ENCODE measurements at regions of chr1 and their contacts with region 1.

Region 1: DNA sequence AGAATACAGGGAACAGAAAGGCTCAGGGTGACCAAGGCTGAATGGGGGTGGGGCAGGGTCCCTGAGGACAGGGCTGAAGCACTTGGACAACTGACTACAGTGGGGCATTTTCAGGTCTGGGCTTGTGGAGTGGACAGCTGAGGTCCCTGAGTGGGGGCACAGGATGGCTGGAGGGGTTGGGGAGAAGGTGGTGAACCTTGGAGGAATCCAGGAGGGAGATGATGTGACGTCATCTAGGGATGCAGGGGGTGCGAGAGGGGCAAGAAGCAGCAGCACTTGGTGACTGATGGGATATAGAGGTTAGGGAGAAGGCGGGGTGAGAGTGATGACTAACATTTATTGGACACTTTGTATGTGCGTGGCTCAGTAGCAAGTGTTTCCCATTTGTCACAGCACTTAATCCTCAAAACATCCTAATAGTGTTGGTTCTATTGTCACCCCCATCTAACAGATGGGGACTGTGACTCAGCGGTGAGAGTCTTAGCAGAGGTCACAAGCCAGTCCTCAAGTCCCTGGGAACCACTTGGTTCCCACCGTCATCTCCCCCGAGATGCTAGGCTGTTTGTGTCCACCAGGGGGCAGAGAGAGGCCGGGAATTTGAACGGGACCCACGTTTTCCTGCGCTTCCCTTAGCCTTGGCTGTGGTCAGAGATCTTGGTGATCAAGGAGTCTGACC is 27.9 kb upstream of the BMP8B start:
- DNase-seq: peak; percentile 80
- ATAC-seq: peak; percentile 61
- H3K4me3 ChIP-seq: peak overlapping the region in 4 of 5 experiments; percentile 25 to 45 (median 28)
- H3K4me3 Mint-ChIP-seq: peak overlapping the region; percentile 78
- H3K27ac ChIP-seq: no peak overlapping the region
- H3K27ac Mint-ChIP-seq: peak overlapping the region; percentile 38
- H3K4me1 ChIP-seq: peaks cover 6 to 15% of the 10 kb centered on the region in 2 donors
- H3K4me1 Mint-ChIP-seq: peaks cover 10% of the 10 kb centered on the region
- H3K27me3 ChIP-seq: no peaks in the 10 kb centered on the region
- H3K27me3 Mint-ChIP-seq: no peaks in the 10 kb centered on the region
- CTCF ChIP-seq: peak; percentile 78

Region 2: DNA sequence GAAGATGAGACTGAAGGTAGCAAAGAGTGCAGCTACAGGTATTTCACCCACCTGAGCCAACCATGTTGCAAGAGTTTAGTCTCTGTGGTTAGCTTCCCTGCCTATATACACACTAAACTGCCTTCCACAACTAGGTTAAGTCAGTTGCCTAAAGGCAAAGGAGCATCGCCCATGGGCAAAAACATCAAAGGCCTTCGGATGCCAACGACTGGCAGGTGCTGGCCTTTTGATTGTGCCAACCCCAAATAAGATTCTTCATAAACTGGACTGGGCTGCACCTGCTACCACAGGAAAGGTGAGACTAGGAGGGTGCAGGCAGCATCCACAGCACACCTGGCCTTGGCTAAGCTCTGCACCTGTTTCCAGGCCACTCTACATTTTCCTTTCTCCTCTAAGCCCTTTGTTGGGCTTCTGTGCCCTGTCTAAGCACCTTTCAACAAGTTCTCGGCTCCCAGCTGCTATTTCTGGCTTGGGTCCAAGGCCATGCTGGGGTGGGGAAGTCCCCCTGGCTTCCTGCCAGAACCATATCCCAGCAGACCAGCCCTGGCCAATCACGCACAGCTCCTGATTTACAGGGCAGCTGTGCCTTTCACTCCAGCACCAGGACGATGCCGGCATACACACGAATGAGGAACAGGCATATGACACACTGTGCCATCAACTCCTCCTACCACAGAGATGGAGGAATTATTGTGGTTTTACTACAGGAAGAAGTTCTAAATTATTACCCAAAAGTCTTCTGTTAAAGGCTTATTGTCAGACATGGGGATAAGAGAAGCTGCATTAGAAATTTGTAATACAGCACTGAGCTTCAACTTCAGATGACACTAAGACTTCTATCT is 28.9 kb after region 1 on chr1:
- CTCF ChIA-PET with region 1: interaction called, 14 read pairs
- POLR2A ChIA-PET with region 1: no interaction called
- intact Hi-C with region 1: no loop called
- DNase-seq: peak; percentile 83
- ATAC-seq: peak; percentile 89
- H3K4me3 ChIP-seq: no peak overlapping the region
- H3K4me3 Mint-ChIP-seq: peak overlapping the region; percentile 11
- H3K27ac ChIP-seq: peak overlapping the region in 1 of 2 donors; percentile 62
- H3K27ac Mint-ChIP-seq: peak overlapping the region; percentile 74
- H3K4me1 ChIP-seq: peaks cover 13 to 21% of the 10 kb centered on the region in 2 donors
- H3K4me1 Mint-ChIP-seq: peaks cover 18% of the 10 kb centered on the region
- H3K27me3 ChIP-seq: no peaks in the 10 kb centered on the region
- H3K27me3 Mint-ChIP-seq: no peaks in the 10 kb centered on the region
- CTCF ChIP-seq: no peak

Region 3: GRCh38 chr1:39886757-39887231 is 70.2 kb after region 1 on chr1:
- CTCF ChIA-PET with region 1: interaction called, 4 read pairs
- POLR2A ChIA-PET with region 1: interaction called, 5 read pairs
- intact Hi-C with region 1: loop called (anchors 5 kb)
- DNase-seq: no peak
- ATAC-seq: no peak
- H3K4me3 ChIP-seq: no peak overlapping the region
- H3K4me3 Mint-ChIP-seq: no peak overlapping the region
- H3K27ac ChIP-seq: no peak overlapping the region
- H3K27ac Mint-ChIP-seq: no peak overlapping the region
- H3K4me1 ChIP-seq: peaks cover 10 to 11% of the 10 kb centered on the region in 2 donors
- H3K4me1 Mint-ChIP-seq: peaks cover 16% of the 10 kb centered on the region
- H3K27me3 ChIP-seq: no peaks in the 10 kb centered on the region
- H3K27me3 Mint-ChIP-seq: peaks cover 6% of the 10 kb centered on the region
- CTCF ChIP-seq: no peak

Region 4: GRCh38 chr1:39901698-39902459 is 85.3 kb after region 1 on chr1 and contains the start of gene MYCL:
- CTCF ChIA-PET with region 1: interaction called, 102 read pairs
- POLR2A ChIA-PET with region 1: interaction called, 3 read pairs
- intact Hi-C with region 1: loop called (anchors 1 kb)
- DNase-seq: peak; percentile 80
- ATAC-seq: peak; percentile 82
- H3K4me3 ChIP-seq: peak within 1 kb of the TSS; percentile 21 to 71 (median 61)
- H3K4me3 Mint-ChIP-seq: peak within 1 kb of the TSS; percentile 85
- H3K27ac ChIP-seq: no peak within 1 kb of the TSS
- H3K27ac Mint-ChIP-seq: peak within 1 kb of the TSS; percentile 20
- H3K4me1 ChIP-seq: peaks cover 14 to 20% of the 10 kb centered on the region in 2 donors
- H3K4me1 Mint-ChIP-seq: peaks cover 6% of the 10 kb centered on the region
- H3K27me3 ChIP-seq: peaks cover 0 to 71% (median 25%) of the 10 kb centered on the region in 4 experiments
- H3K27me3 Mint-ChIP-seq: peaks cover 47% of the 10 kb centered on the region
- CTCF ChIP-seq: peak; percentile 77
- total RNA-seq, gene MYCL: 0.49 and 0.62 TPM in 2 replicates

Region 5: GRCh38 chr1:39954816-39955546 is 138.4 kb after region 1 on chr1 and contains the start of gene MFSD2A:
- CTCF ChIA-PET with region 1: interaction called, 3 read pairs
- POLR2A ChIA-PET with region 1: interaction called, 3 read pairs
- intact Hi-C with region 1: loop called (anchors 5 kb)
- DNase-seq: peak; percentile 91
- ATAC-seq: peak; percentile 98
- H3K4me3 ChIP-seq: peak within 1 kb of the TSS; percentile 45 to 94 (median 67)
- H3K4me3 Mint-ChIP-seq: peak within 1 kb of the TSS; percentile 90
- H3K27ac ChIP-seq: peak within 1 kb of the TSS; percentile 27 to 48
- H3K27ac Mint-ChIP-seq: peak within 1 kb of the TSS; percentile 84
- H3K4me1 ChIP-seq: peaks cover 15 to 30% of the 10 kb centered on the region in 2 donors
- H3K4me1 Mint-ChIP-seq: peaks cover 37% of the 10 kb centered on the region
- H3K27me3 ChIP-seq: no peaks in the 10 kb centered on the region
- H3K27me3 Mint-ChIP-seq: peaks cover under 1% of the 10 kb centered on the region
- CTCF ChIP-seq: no peak
- total RNA-seq, gene MFSD2A: 3.9 TPM in 2 replicates

Measured in B cell (primary cell).